Left ventricle myocardium superior (tissue), 1 donor: ENCODE measurements at regions of chrX and their contacts with region 1.

Region 1: GRCh38 chrX:1657367-1658070 is 42.7 kb downstream of the ASMT start:
- DNase-seq: no peak
- ATAC-seq: peak; percentile 53

Region 2: GRCh38 chrX:2595258-2595657 is 937.7 kb after region 1 on chrX:
- intact Hi-C with region 1: loop called (anchors 10 kb)
- DNase-seq: no peak
- ATAC-seq: no peak